Heart right ventricle (tissue), 16 donors: ENCODE measurements at regions of chr4 and their contacts with region 1.

Region 1: GRCh38 chr4:54392479-54392878 is 163.4 kb downstream of the PDGFRA start:
- DNase-seq: no peak
- ATAC-seq: no peak
- H3K4me3 ChIP-seq: no peak overlapping the region
- H3K27ac ChIP-seq: no peak overlapping the region
- H3K4me1 ChIP-seq: no peaks in the 10 kb centered on the region
- H3K27me3 ChIP-seq: no peaks in the 10 kb centered on the region
- CTCF ChIP-seq: no peak

Region 2: DNA sequence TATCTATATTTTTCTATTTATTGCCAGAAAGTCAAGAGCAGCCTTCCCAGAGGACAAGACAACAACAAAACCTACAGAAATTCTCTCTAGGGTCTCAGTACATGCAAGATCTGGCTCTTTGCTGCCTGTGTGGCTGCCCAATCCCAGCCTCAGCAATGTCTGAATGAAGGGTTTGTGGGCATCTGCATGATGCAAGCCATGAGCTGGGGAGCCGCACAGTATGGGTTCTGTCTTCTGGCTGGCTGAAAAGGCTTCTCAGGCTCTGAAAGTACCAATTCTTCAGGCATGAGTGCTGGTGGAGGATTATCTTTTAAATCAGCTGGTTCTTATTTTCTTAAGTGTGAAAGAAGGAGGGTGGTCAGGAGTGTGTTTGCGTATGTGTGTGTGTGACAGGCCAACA is 58.8 kb before region 1 on chr4:
- intact Hi-C with region 1: no loop called
- DNase-seq: no peak
- ATAC-seq: no peak
- H3K4me3 ChIP-seq: no peak overlapping the region
- H3K27ac ChIP-seq: no peak overlapping the region
- H3K4me1 ChIP-seq: peaks cover 0 to 13% (median 0%) of the 10 kb centered on the region in 9 donors
- H3K27me3 ChIP-seq: no peaks in the 10 kb centered on the region
- CTCF ChIP-seq: no peak

Region 3: GRCh38 chr4:54427826-54428225 is 35.3 kb after region 1 on chr4:
- intact Hi-C with region 1: loop called in 3 of 10 experiments (anchors 5 to 10 kb)
- DNase-seq: no peak
- ATAC-seq: no peak
- H3K4me3 ChIP-seq: no peak overlapping the region
- H3K27ac ChIP-seq: no peak overlapping the region
- H3K4me1 ChIP-seq: no peaks in the 10 kb centered on the region
- H3K27me3 ChIP-seq: peaks cover 0 to 3% (median 0%) of the 10 kb centered on the region in 7 donors
- CTCF ChIP-seq: no peak

Region 4: GRCh38 chr4:54433686-54434085 is 41.2 kb after region 1 on chr4:
- intact Hi-C with region 1: loop called in 3 of 10 experiments (anchors 5 to 10 kb)
- DNase-seq: no peak
- ATAC-seq: no peak
- H3K4me3 ChIP-seq: no peak overlapping the region
- H3K27ac ChIP-seq: no peak overlapping the region
- H3K4me1 ChIP-seq: no peaks in the 10 kb centered on the region
- H3K27me3 ChIP-seq: peaks cover 0 to 9% (median 0%) of the 10 kb centered on the region in 7 donors
- CTCF ChIP-seq: peak in 8 of 9 donors; percentile 18 to 61 (median 43)